Activated CD4-positive, alpha-beta memory T cell treated with anti-CD3 and anti-CD28 coated beads for 36 hours (primary cell): ENCODE measurements at regions of chr15 and their contacts with region 1.

Region 1: GRCh38 chr15:84658080-84658787 is at the start of gene NMB:
- DNase-seq: peak; percentile 90
- H3K4me3 Mint-ChIP-seq: peak within 1 kb of the TSS; percentile 69
- H3K27ac Mint-ChIP-seq: peak within 1 kb of the TSS; percentile 68
- H3K4me1 Mint-ChIP-seq: peaks cover 34% of the 10 kb centered on the region
- H3K27me3 Mint-ChIP-seq: no peaks in the 10 kb centered on the region
- total RNA-seq, gene NMB: 6.2 to 7.8 TPM

Region 2: DNA sequence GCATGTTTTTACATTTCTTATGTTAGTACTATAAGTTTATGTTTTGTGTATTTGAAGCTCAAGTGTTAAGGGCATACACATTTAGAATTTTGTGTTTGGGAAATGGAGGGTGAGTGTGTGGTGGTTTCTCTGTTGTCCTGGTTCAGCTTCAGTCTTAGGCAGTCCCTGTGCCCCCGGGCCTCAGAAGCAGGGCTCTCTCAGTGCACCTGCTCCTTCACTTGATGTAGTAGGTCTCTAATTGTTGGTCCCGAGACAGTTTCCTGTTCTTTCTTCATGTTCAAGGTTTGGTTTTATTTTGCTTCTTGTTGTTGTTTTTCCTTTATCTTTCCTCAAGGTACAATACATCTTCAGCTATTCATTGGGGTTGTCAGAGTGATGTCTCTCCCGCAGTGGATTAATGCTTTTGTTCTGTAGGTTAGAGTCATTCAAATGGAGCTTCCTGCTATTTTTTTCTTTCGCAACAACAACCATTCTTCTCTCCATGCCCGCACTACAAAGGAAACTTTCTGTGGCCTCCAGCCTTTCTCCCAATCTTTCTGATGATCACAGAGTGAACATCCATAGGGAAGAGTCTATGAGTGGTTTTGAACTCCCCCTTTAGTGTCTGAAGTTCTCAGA is 600.4 kb before region 1 on chr15:
- CTCF ChIA-PET with region 1: no interaction called
- POLR2A ChIA-PET with region 1: no interaction called
- intact Hi-C with region 1: no loop called
- DNase-seq: no peak
- H3K4me3 Mint-ChIP-seq: no peak overlapping the region
- H3K27ac Mint-ChIP-seq: no peak overlapping the region
- H3K4me1 Mint-ChIP-seq: no peaks in the 10 kb centered on the region
- H3K27me3 Mint-ChIP-seq: peaks cover 2% of the 10 kb centered on the region

Region 3: DNA sequence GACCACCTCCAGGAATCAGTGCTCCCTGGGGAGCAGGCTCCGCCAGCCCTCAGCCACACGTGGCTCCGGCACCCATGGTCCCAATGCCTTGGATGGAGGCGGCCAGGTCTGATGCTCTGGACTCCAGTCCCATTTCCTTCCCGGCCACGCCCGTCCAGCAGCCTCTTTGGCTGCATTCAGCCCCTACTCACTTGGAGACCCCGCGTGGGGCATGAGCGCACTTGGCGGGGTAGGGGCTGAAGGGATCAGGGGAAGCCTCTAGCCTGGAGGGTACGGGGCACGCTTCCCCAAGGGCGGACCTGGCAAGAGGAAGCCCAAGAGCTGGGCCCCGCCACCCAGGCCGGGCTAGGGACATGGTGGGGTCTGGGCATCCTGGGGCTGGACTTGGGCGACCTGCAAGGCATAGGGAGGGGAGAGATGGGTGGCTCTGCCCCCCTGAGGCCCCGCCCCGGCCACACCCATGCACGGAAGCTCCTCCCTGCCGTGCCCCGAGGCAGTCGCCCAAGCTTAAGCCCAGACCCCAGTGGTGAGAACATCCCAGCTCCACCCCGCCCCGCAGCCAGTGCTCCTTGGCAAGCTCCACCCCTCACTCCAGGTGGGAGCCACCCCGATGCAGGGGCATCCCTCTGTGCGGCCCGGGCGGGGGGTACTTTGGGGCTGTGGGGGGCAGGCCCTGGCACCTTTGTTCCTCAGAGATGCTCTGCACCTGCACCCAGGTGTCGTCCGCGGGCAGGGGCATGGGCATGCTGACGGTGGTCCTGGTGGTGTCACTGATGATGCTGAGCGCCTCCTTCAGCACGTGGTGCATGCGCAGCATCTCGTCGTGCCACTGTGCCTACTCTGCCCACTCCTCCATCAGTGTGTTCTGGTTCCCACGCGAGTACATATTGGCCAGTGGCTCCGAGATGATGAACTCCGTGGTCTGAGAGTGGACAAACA is 259.2 kb before region 1 on chr15:
- CTCF ChIA-PET with region 1: no interaction called
- POLR2A ChIA-PET with region 1: no interaction called
- intact Hi-C with region 1: no loop called
- DNase-seq: no peak
- H3K4me3 Mint-ChIP-seq: no peak overlapping the region
- H3K27ac Mint-ChIP-seq: no peak overlapping the region
- H3K4me1 Mint-ChIP-seq: no peaks in the 10 kb centered on the region
- H3K27me3 Mint-ChIP-seq: peaks cover under 1% of the 10 kb centered on the region

Region 4: DNA sequence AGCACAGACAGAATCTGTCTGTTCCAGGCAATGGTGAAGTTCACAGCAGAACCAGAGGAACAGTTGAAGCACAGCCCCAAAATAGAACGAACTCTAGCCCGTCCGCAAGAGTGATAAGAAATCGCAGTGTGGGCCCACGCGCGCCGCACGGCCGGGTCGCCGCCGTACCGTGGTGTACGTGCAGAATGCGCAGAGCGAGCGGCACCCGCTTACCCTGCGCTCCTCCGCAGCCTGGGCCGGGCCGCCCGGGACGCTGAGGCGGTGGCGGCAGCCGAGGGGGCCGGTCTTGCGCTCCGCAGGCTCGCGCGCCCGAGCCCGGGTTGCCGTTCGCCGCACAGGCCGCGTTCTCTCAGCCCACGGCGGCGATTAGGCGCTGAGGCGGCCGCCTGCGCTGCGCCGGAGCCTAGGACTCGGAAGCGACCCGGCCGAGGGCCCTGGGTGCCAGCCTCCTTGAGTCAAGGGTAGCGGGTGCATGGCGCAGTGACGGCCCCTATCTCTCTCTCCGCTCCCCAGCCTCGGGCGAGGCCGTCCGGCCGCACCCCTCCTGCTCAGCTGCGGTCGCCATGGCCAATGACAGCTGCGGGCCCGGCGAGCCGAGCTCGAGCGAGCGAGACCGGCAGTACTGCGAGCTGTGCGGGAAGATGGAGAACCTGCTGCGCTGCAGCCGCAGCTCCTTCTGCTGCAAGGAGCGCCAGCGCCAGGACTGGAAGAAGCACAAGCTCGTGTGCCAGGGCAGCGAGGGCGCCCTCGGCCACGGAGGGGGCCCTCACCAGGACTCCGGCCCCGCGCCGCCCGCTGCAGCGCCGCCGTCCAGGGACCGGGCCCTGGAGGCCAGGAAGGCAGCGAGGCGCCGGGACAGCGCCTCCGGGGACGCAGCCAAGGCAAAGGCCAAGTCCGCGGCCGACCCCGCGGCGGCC is 24.7 kb before region 1 on chr15:
- CTCF ChIA-PET with region 1: interaction called, 6 read pairs
- POLR2A ChIA-PET with region 1: interaction called, 9 read pairs
- intact Hi-C with region 1: loop called (anchors 1 kb)
- DNase-seq: peak; percentile 73
- H3K4me3 Mint-ChIP-seq: peak overlapping the region; percentile 98
- H3K27ac Mint-ChIP-seq: peak overlapping the region; percentile 96
- H3K4me1 Mint-ChIP-seq: peaks cover 47% of the 10 kb centered on the region
- H3K27me3 Mint-ChIP-seq: no peaks in the 10 kb centered on the region

Region 5: GRCh38 chr15:84685304-84685703 is 27.1 kb after region 1 on chr15:
- CTCF ChIA-PET with region 1: interaction called, 3 read pairs
- POLR2A ChIA-PET with region 1: no interaction called
- intact Hi-C with region 1: loop called (anchors 2 kb)
- DNase-seq: no peak
- H3K4me3 Mint-ChIP-seq: no peak overlapping the region
- H3K27ac Mint-ChIP-seq: no peak overlapping the region
- H3K4me1 Mint-ChIP-seq: peaks cover 36% of the 10 kb centered on the region
- H3K27me3 Mint-ChIP-seq: no peaks in the 10 kb centered on the region

Region 6: DNA sequence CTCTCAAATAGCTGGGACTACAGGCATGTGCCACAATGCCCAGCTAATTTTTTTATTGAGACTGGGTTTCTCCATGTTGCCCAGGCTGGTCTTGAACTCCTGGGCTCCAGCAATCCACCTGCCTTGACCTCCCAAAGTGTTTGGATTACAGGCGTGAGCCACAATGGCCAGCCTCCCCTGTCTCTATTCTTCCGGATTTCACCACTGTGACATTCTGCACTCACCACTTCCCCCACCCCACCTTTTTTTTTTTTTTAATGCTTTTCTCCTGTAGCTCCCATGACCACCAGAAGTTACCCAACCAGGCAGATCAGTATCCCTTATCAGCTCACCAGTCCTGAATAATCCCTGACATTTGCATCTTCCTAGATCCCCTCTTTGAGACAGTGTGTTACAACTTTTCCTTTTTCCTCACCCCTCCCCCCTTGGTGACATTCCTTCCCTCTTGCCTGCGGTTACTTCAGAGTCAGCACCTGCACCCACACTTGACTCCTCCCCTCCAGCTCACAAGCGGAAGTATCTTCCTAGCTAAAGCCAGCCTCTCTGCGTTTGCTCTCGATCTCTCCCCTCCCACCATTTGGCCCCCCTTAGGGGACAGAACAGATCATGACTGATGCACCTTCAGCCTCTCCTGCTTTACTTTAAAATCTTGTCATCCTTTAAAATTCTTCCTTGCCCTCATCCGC is 76.7 kb after region 1 on chr15:
- CTCF ChIA-PET with region 1: interaction called, 12 read pairs
- POLR2A ChIA-PET with region 1: interaction called, 5 read pairs
- intact Hi-C with region 1: loop called (anchors 1 kb)
- DNase-seq: peak; percentile 86
- H3K4me3 Mint-ChIP-seq: peak overlapping the region; percentile 67
- H3K27ac Mint-ChIP-seq: peak overlapping the region; percentile 96
- H3K4me1 Mint-ChIP-seq: peaks cover 61% of the 10 kb centered on the region
- H3K27me3 Mint-ChIP-seq: no peaks in the 10 kb centered on the region

Region 7: GRCh38 chr15:84871428-84872305 is 213.4 kb after region 1 on chr15:
- CTCF ChIA-PET with region 1: interaction called, 13 read pairs
- POLR2A ChIA-PET with region 1: no interaction called
- intact Hi-C with region 1: no loop called
- DNase-seq: no peak
- H3K4me3 Mint-ChIP-seq: no peak overlapping the region
- H3K27ac Mint-ChIP-seq: no peak overlapping the region
- H3K4me1 Mint-ChIP-seq: no peaks in the 10 kb centered on the region
- H3K27me3 Mint-ChIP-seq: no peaks in the 10 kb centered on the region

Region 8: GRCh38 chr15:84929744-84930371 is 271.6 kb after region 1 on chr15:
- CTCF ChIA-PET with region 1: interaction called, 9 read pairs
- POLR2A ChIA-PET with region 1: no interaction called
- intact Hi-C with region 1: loop called (anchors 1 kb)
- DNase-seq: peak; percentile 46
- H3K4me3 Mint-ChIP-seq: no peak overlapping the region
- H3K27ac Mint-ChIP-seq: peak overlapping the region; percentile 44
- H3K4me1 Mint-ChIP-seq: peaks cover 8% of the 10 kb centered on the region
- H3K27me3 Mint-ChIP-seq: peaks cover 2% of the 10 kb centered on the region

Region 9: GRCh38 chr15:85318048-85318731 is 660.0 kb after region 1 on chr15:
- CTCF ChIA-PET with region 1: no interaction called
- POLR2A ChIA-PET with region 1: no interaction called
- intact Hi-C with region 1: no loop called
- DNase-seq: peak; percentile 50
- H3K4me3 Mint-ChIP-seq: no peak overlapping the region
- H3K27ac Mint-ChIP-seq: peak overlapping the region; percentile 28
- H3K4me1 Mint-ChIP-seq: peaks cover 49% of the 10 kb centered on the region
- H3K27me3 Mint-ChIP-seq: no peaks in the 10 kb centered on the region